Sciatic nerve (tissue), 2 donors: ENCODE measurements at regions of chr4 and their contacts with region 1.

Region 1: DNA sequence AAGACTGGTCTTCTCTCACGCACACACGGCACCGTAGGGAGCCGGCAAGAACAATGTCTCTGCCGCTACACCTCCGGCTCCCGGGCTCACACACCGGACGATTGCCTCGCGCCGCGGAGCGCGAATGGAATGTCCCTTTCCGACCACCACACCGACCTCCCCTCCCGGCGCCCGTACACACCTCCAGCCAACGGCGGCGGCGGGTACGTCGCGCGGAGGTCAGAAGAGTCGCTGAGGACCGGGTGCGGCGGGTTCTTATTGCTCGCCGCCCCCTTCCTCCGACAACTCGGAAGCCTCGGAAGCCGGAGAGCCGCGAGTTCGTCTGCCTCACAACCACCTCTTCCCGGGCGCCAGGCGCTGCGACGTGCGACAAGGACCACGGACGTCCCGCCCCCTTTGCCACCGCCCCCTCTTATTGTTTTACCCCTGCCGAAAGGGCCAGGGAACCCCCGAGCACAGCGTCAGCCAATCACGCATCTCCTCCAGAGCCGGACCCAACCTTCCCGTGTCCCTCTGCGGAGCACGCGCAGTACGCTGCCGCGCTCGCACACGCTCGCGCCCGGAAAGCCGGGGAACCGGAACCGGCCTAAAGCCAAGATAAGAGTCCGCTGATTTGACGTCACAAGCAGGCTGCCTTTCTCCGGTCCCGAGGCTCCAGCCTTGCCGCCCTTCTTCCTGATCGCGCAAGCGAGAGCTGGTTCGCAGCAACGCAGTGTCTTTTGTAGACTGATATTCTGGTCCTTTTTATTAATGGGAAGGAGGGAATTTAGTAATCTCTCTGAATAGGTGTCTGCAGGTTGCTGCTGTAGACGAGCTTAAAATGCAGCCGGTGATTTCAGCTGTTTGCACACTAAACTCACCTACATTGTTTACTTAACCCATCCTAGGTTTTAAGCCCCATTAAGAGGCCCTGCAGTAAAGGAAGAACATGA is at the start of gene G3BP2:
- DNase-seq: peak; percentile 98
- ATAC-seq: peak; percentile 100
- total RNA-seq, gene G3BP2: 87.7 TPM

Region 2: DNA sequence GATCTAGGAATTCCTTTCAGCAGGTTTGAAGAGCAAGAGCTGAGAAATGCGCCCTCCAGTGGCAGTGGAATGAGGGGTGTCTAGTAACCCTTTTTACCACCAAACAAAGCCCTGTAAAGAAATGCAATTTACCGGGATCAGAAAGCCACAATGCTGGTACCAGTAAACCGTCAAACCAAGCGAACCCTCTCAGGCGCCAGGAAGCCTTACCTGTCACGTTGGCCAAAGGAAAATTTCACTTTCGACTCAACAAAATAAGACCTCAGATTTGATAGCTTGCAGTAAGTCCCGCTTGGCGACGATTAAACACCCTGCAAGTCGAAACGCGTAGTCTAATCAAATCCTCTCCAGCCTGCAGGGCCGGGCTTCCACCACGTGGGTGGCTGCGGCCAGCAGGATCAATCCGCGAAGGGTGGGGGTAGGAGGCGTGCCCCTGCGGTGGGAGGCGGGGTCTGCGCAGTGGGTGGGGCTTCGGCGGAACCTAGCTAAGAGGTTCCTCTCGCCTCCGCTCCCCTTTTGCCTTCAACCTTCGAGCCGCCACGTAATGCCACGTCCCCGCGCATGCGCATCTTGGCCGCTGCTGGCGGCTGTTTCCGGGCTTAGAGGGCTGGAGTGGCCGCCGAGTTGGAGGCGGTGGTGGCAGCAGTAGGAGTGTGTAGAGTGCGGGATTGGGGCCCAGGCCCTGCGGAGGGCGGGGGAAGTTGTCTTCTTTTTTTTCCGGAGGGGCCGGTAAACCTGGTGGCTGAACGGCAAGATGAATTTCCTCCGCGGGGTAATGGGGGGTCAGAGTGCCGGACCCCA is 51.0 kb after region 1 on chr4 and contains the start of gene USO1:
- intact Hi-C with region 1: loop called (anchors 10 kb)
- DNase-seq: peak; percentile 100
- ATAC-seq: peak; percentile 99
- total RNA-seq, gene USO1: 64.1 TPM

Region 3: DNA sequence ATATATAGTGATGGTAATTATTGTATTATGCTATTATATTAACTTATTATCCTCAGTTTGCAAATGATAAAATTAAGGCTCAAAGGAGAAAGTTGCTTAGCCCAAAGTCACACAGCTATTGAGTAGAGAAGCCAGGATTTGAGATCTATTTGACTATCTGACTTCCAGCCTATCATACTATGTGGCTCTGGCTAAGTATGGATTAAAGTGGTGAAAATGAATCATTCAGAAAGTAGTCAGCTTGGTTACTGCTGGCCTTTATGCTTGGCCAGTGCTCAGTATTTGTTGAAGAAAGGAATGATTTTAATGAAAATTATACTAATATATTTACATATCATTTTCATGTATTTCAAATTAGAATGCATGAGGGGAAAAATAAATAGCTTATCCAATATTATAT is 981.5 kb after region 1 on chr4:
- intact Hi-C with region 1: no loop called
- DNase-seq: no peak
- ATAC-seq: no peak